ENCODE measurements at regions of chr16 and their contacts with region 1.

Region 1: GRCh38 chr16:14462811-14463210 is 167.2 kb downstream of the PARN start:
- DNase-seq: no peak
- H3K4me3 ChIP-seq: no peak overlapping the region
- H3K27me3 ChIP-seq: no peaks in the 10 kb centered on the region
- CTCF ChIP-seq: no peak

Region 2: DNA sequence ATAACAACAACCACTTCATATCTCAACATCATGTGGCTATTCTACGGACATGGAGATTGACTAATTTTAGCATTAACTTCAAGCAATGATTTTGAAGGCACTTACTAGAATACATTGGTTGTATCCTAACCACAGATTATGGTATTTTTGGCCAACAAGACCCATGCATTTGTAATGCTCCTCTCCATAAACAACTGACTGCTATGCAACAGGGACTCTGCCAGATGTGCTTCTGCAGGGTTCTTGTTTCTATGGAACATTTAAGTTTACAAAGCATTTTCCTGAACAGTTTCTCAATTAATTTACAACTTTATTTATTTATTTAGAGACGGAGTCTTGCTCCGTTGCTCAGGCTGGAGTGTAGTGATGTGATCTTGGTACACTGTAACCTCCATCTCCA is 10.7 kb before region 1 on chr16:
- CTCF ChIA-PET with region 1: no interaction called
- POLR2A ChIA-PET with region 1: interaction called, 27 read pairs
- DNase-seq: no peak
- H3K4me3 ChIP-seq: no peak overlapping the region
- H3K27me3 ChIP-seq: no peaks in the 10 kb centered on the region
- CTCF ChIP-seq: no peak

Measured in BJ (cell line).